ENCODE measurements at regions of chr14 and their contacts with region 1.

Region 1: GRCh38 chr14:69574263-69574953 is at the start of gene CCDC177:
- DNase-seq: no peak
- H3K4me3 ChIP-seq: no peak within 1 kb of the TSS
- H3K27me3 ChIP-seq: peaks cover 47% of the 10 kb centered on the region
- CTCF ChIP-seq: peak; percentile 96
- polyA plus RNA-seq, gene CCDC177: not detected in 2 replicates

Region 2: DNA sequence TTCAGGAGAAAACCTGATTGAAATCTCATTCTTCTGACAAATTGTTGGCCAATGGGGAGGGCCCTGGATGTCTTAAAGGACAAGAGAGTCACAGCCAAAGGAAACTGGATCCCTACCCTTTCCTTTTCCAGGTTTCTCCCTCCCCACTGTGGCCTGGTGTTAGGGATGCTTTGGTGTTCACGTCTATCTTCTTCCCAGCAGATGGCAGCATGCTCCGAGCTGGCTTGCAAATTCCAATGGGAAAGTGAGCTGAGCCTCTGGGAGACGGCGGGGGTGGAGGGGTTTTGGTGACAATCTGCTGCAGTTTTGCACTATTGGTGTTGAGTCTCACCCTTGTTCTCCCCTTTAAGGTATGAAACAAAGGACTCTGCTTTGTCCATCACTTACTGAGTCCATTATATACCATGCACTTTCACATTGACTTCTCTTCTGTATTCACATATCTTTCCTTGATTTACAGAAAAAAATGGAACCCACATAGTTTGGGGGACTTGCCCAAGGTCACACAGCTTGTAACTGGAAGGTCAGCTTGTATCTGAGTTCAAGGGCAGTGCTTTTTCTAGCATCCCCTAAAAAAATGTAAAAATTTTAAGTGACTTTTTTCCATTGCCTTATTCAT is 39.1 kb before region 1 on chr14:
- CTCF ChIA-PET with region 1: interaction called, 64 read pairs
- POLR2A ChIA-PET with region 1: interaction called, 3 read pairs
- DNase-seq: no peak
- H3K4me3 ChIP-seq: no peak overlapping the region
- H3K27me3 ChIP-seq: peaks cover 10% of the 10 kb centered on the region
- CTCF ChIP-seq: peak; percentile 86

Region 3: GRCh38 chr14:69543341-69544249 is 30.8 kb before region 1 on chr14:
- CTCF ChIA-PET with region 1: interaction called, 64 read pairs
- POLR2A ChIA-PET with region 1: interaction called, 3 read pairs
- DNase-seq: no peak
- H3K4me3 ChIP-seq: no peak overlapping the region
- H3K27me3 ChIP-seq: peaks cover 3% of the 10 kb centered on the region
- CTCF ChIP-seq: no peak

Region 4: DNA sequence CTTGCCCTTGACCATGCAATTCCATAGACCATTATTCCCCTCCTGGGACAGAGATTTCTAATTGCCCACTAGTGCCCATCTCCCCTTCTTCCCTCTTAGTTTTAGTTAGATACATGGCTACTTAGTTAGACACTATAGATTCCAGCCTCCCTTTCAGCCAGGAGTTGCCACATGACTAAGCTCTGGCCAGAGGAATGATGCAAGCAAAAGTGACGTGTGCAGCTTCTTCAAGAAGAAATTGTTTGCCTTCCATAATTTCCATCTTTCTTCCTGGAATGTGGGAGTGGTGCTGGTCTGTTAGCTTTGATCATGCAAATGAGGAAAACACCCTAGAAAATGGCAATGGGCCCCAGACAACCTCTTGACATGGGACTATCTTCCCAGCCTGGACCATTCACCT is 21.2 kb before region 1 on chr14:
- CTCF ChIA-PET with region 1: interaction called, 24 read pairs
- POLR2A ChIA-PET with region 1: no interaction called
- DNase-seq: no peak
- H3K4me3 ChIP-seq: no peak overlapping the region
- H3K27me3 ChIP-seq: peaks cover 6% of the 10 kb centered on the region
- CTCF ChIP-seq: no peak

Region 5: DNA sequence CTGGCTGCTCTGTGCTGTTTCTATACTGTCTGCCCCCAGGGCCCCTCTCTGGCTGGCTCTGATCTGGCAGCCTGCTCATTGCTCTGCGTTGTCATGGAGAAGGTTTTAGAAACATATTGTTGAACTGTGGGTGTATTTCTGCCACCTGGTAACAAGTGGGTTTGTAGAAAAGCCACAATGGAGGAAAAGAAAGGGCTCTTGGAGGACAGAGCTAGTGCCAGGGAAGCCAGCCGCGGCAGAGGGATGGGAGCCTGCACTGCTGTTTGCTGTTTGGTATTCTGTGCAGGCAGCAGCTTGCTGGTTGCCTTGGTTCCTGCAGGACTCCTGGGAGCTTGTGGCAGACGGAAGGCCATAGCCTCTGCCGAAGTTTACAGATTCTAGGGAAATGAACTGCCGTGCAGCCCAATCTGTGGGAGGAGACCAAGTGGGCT is 14.8 kb before region 1 on chr14:
- CTCF ChIA-PET with region 1: interaction called, 31 read pairs
- POLR2A ChIA-PET with region 1: no interaction called
- DNase-seq: no peak
- H3K4me3 ChIP-seq: no peak overlapping the region
- H3K27me3 ChIP-seq: peaks cover 19% of the 10 kb centered on the region
- CTCF ChIP-seq: no peak

Region 6: GRCh38 chr14:69586404-69586803 is 12.0 kb after region 1 on chr14:
- CTCF ChIA-PET with region 1: interaction called, 49 read pairs
- POLR2A ChIA-PET with region 1: no interaction called
- DNase-seq: no peak
- H3K4me3 ChIP-seq: no peak overlapping the region
- H3K27me3 ChIP-seq: no peaks in the 10 kb centered on the region
- CTCF ChIP-seq: no peak

Region 7: GRCh38 chr14:69726761-69727511 is 152.5 kb after region 1 on chr14:
- CTCF ChIA-PET with region 1: interaction called, 19 read pairs
- POLR2A ChIA-PET with region 1: no interaction called
- DNase-seq: no peak
- H3K4me3 ChIP-seq: peak overlapping the region; percentile 42
- H3K27me3 ChIP-seq: no peaks in the 10 kb centered on the region; the same call in 1 of the 2 replicates
- CTCF ChIP-seq: peak; percentile 99